Heart left ventricle (tissue), 16 donors: ENCODE measurements at regions of chr2 and their contacts with region 1.

Region 1: GRCh38 chr2:16281451-16282336 is 341.3 kb downstream of the MYCN start:
- DNase-seq: peak in 1 of 5 donors; percentile 15
- ATAC-seq: peak; percentile 42 to 77 (median 69)
- H3K4me3 ChIP-seq: no peak overlapping the region
- H3K27ac ChIP-seq: no peak overlapping the region
- H3K4me1 ChIP-seq: no peaks in the 10 kb centered on the region
- H3K27me3 ChIP-seq: no peaks in the 10 kb centered on the region
- CTCF ChIP-seq: peak; percentile 2 to 70 (median 55)
- POLR2A ChIP-seq: no peak

Region 2: GRCh38 chr2:15748736-15749323 is 532.9 kb before region 1 on chr2:
- intact Hi-C with region 1: no loop called
- DNase-seq: no peak
- ATAC-seq: no peak
- H3K4me3 ChIP-seq: no peak overlapping the region
- H3K27ac ChIP-seq: peak overlapping the region in 1 of 12 donors; percentile 40
- H3K4me1 ChIP-seq: peaks cover 0 to 41% (median 20%) of the 10 kb centered on the region in 12 donors
- H3K27me3 ChIP-seq: no peaks in the 10 kb centered on the region
- CTCF ChIP-seq: peak in 10 of 12 donors; percentile 17 to 39 (median 26)
- POLR2A ChIP-seq: no peak

Region 3: GRCh38 chr2:16093639-16094529 is 187.8 kb before region 1 on chr2:
- intact Hi-C with region 1: no loop called
- DNase-seq: peak in 1 of 5 donors; percentile 47
- ATAC-seq: peak in 3 of 4 donors; percentile 34 to 74 (median 70)
- H3K4me3 ChIP-seq: no peak overlapping the region
- H3K27ac ChIP-seq: no peak overlapping the region
- H3K4me1 ChIP-seq: peaks cover 0 to 8% (median 0%) of the 10 kb centered on the region in 12 donors
- H3K27me3 ChIP-seq: no peaks in the 10 kb centered on the region
- CTCF ChIP-seq: no peak
- POLR2A ChIP-seq: no peak

Region 4: GRCh38 chr2:16201848-16202247 is 79.8 kb before region 1 on chr2:
- intact Hi-C with region 1: no loop called
- DNase-seq: no peak
- ATAC-seq: no peak
- H3K4me3 ChIP-seq: no peak overlapping the region
- H3K27ac ChIP-seq: no peak overlapping the region
- H3K4me1 ChIP-seq: no peaks in the 10 kb centered on the region
- H3K27me3 ChIP-seq: no peaks in the 10 kb centered on the region
- CTCF ChIP-seq: no peak
- POLR2A ChIP-seq: no peak

Region 5: GRCh38 chr2:16487686-16488085 is 206.0 kb after region 1 on chr2:
- intact Hi-C with region 1: loop called in 2 of 10 experiments (anchors 10 kb)
- DNase-seq: peak in 1 of 5 donors; percentile 10
- ATAC-seq: peak in 2 of 4 donors; percentile 62 to 70
- H3K4me3 ChIP-seq: no peak overlapping the region
- H3K27ac ChIP-seq: no peak overlapping the region
- H3K4me1 ChIP-seq: no peaks in the 10 kb centered on the region
- H3K27me3 ChIP-seq: peaks cover 0 to 6% (median 0%) of the 10 kb centered on the region in 9 donors
- CTCF ChIP-seq: peak; percentile 19 to 54 (median 42)
- POLR2A ChIP-seq: no peak

Region 6: DNA sequence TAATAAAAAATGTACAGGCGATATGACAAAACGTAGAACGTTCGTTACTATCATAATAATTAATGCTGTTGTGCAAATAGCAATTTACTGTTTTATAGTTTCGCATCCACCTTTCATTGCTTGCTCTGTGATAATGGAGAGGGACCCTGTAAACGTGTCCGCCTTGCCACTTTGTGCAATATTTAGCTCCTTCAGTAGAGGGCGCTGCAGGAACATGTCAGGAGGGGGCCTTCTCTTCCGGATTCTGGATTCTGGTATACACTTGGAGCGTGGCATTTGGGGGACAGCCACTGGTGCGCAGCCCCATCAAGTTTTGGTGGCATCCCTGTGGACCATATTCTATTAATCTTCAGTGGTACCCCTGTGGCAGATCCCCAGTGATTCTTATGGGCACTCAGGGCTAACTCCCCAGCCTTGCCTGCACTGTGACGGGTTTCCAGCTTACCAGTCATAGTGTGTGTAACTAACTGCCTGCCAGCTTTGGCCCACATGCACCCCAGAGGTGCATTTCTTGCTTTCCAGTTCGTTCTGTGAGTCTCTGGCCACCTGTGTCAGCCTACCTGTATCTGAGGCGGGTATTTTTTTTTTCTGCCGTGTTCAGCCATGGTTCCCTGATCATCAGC is 243.7 kb after region 1 on chr2:
- intact Hi-C with region 1: no loop called
- DNase-seq: no peak
- ATAC-seq: no peak
- H3K4me3 ChIP-seq: no peak overlapping the region
- H3K27ac ChIP-seq: no peak overlapping the region
- H3K4me1 ChIP-seq: peaks cover 0 to 8% (median 0%) of the 10 kb centered on the region in 12 donors
- H3K27me3 ChIP-seq: peaks cover 0 to 9% (median 0%) of the 10 kb centered on the region in 9 donors
- CTCF ChIP-seq: peak in 10 of 12 donors; percentile 15 to 50 (median 35)
- POLR2A ChIP-seq: no peak